ENCODE measurements at regions of chr14 and their contacts with region 1.

Region 1: DNA sequence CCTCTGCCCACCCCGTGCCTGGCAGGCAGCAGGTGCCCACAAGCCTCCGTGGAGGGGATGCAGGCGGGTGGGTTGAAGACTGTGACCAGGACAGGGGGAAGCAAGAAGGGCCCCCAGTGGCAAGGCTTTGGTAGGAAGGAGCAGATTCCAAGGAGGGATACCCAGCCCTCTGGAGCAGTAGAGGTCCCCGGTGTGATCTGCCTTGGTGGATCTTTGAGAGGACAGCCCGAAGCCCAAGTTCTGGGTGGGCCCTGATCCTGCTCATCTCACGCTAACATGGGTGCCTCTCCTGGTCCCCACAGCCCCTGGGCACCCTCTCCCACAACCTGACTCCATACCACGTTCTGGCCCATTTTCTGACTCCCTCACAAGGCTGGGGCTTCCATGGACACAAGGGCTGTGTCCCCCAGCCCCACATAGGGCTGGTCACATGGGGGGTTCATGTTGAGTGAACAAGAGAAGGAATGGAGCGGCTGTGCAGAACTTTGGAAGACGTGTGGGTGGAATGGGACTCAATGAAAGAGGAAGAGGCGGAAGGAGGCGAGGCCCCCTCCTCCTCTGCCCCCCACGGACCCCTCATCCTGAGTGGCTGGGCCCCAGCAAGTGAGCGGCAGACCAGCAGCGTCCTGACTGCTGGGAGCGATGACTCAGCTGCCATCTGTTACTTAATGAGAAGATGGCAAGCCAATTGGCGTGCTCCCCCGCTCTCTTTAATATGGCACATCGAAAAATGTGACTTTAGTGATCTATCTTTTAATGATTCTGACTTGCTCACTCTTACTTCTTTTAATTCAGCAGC is 77.0 kb upstream of the BCL11B start:
- DNase-seq: no peak
- ATAC-seq: no peak
- H3K4me3 ChIP-seq: no peak overlapping the region
- H3K4me3 Mint-ChIP-seq: no peak overlapping the region
- H3K27ac ChIP-seq: no peak overlapping the region
- H3K27ac Mint-ChIP-seq: no peak overlapping the region
- H3K4me1 ChIP-seq: no peaks in the 10 kb centered on the region
- H3K4me1 Mint-ChIP-seq: no peaks in the 10 kb centered on the region
- H3K27me3 ChIP-seq: peaks cover 0 to 2% of the 10 kb centered on the region in 2 experiments
- H3K27me3 Mint-ChIP-seq: peaks cover 8% of the 10 kb centered on the region
- CTCF ChIP-seq: no peak

Region 2: DNA sequence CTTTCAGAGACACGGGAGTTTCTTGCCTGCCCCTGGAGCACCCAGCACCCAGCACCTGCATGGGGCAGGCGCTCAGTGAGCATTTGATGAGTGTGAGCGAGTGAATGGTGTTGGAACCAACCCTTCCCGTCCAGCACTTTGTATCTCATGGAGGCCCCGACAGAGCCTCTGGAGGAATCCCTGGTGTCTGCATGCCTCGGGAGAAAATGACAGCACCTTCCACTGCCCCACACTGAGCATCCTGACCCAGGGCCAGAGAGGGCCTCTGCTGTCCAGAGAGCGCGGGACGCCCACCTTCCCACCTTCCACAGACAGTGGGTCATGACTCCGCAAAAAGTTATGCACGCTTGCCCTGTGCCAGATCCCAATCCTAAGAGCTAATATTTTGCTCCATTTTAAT is 25.9 kb after region 1 on chr14:
- CTCF ChIA-PET with region 1: no interaction called
- POLR2A ChIA-PET with region 1: no interaction called
- intact Hi-C with region 1: loop called in 1 of 2 experiments (anchors 1 kb)
- DNase-seq: no peak
- ATAC-seq: no peak
- H3K4me3 ChIP-seq: no peak overlapping the region
- H3K4me3 Mint-ChIP-seq: no peak overlapping the region
- H3K27ac ChIP-seq: no peak overlapping the region
- H3K27ac Mint-ChIP-seq: no peak overlapping the region
- H3K4me1 ChIP-seq: no peaks in the 10 kb centered on the region
- H3K4me1 Mint-ChIP-seq: no peaks in the 10 kb centered on the region
- H3K27me3 ChIP-seq: peaks cover 5 to 6% of the 10 kb centered on the region in 2 experiments
- H3K27me3 Mint-ChIP-seq: peaks cover 25% of the 10 kb centered on the region
- CTCF ChIP-seq: no peak